ENCODE measurements at regions of chr3 and their contacts with region 1.

Region 1: DNA sequence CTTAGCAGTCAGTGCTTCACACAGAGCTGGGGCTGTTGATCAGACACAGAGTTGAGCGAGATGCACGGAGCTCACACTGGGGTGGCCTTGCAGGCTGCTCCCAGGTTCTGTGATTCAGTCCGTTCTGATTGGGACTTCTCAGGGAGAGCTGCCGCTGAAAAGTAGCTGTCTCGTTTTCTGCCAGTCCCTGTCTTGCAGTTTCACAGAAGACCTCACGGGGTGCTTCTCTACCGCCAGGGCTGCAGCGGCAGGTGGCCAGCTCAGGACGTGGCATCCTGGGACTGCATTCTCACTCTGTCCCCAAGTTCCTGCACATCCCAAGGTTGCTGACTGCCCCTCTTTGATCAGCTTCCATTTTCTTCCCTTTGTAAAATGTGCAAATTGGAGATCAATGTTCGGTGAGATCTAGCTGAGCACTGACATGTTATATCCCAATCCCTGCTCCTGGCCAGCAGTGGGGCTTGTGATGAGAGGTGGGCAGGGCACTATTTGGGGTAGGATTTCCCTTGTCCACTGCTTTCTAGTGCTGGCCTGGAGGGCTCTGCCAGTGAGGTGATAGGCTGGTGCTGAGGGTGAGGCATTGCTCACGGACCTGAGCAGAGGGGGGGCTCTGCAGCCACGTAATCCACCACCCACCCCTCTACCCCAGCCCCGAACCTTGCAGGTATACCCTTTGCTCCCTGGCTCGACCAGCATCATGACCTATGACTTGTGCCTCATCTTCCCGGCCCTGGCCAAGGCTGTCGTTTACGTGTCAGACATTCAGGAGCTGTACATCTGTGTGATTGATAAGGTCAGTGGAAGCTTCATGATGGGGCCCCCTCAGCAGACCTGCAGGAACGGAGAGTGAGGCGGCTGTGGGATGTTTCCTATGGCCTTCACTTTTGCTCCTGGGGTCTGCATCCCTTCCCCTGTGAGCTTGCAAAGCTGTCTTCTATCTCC is 5.3 kb upstream of the TXNRD3 start:
- DNase-seq: no peak
- H3K4me3 ChIP-seq: no peak overlapping the region
- H3K27ac ChIP-seq: no peak overlapping the region
- H3K4me1 ChIP-seq: peaks cover 0 to 4% (median 0%) of the 10 kb centered on the region in 3 donors
- H3K27me3 ChIP-seq: peaks cover 0 to 73% (median 0%) of the 10 kb centered on the region in 4 donors
- CTCF ChIP-seq: peak in 3 of 6 experiments; percentile 11 to 32 (median 14)
- POLR2A ChIP-seq: no peak

Region 2: DNA sequence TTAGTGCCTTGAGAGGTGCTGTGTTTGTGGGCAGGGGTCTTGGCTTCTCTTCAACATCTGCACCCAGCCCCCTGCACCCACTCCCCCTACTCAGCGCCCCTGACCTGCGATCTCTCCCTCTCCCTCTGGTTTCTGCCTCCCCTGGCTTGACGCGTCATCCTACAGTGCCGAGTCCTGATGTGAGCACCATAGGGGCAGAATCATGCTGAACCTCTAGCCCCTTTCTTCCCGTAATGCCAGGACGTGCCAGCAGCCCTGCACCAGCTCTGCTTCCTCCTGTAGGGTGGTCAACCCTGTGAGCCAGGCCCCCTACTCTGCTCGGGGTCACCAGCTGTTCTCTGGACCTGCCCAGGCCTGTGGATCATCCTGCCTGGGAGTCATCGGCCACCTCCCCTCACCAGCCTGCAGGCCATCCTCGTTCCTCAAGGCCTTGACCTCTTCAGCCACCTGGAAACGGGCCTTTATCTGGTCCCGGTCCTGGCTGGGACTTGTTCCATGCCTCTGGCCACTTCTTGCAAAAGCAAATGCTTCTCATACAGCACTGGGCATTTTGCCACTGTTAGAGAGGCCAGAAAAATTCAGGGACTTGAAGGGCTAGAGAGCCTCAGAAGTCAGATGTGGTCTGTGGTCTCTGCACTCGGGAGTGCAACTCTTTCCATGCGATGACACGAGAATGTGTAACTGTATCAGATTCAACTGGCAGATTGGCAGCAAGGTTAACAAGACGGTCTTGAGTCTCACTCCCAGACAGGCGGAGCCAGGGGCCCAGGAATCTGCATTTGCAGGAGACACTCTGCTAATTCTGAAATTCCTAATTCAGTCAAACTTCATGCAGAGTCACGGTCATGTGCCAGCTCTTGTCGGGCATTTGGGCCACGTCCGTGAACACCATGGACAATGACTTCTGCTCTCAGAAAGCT is 286.3 kb before region 1 on chr3:
- intact Hi-C with region 1: no loop called
- DNase-seq: no peak
- H3K4me3 ChIP-seq: no peak overlapping the region
- H3K27ac ChIP-seq: peak overlapping the region in 2 of 4 donors; percentile 17 to 50
- H3K4me1 ChIP-seq: peaks cover 0 to 11% (median 0%) of the 10 kb centered on the region in 3 donors
- H3K27me3 ChIP-seq: peaks cover 0 to under 1% (median 0%) of the 10 kb centered on the region in 4 donors
- CTCF ChIP-seq: no peak
- POLR2A ChIP-seq: no peak

Region 3: GRCh38 chr3:127089486-127090145 is 429.4 kb after region 1 on chr3:
- intact Hi-C with region 1: no loop called
- DNase-seq: no peak
- H3K4me3 ChIP-seq: no peak overlapping the region
- H3K27ac ChIP-seq: no peak overlapping the region
- H3K4me1 ChIP-seq: no peaks in the 10 kb centered on the region
- H3K27me3 ChIP-seq: peaks cover 0 to 6% (median 0%) of the 10 kb centered on the region in 4 donors
- CTCF ChIP-seq: no peak
- POLR2A ChIP-seq: no peak

Region 4: DNA sequence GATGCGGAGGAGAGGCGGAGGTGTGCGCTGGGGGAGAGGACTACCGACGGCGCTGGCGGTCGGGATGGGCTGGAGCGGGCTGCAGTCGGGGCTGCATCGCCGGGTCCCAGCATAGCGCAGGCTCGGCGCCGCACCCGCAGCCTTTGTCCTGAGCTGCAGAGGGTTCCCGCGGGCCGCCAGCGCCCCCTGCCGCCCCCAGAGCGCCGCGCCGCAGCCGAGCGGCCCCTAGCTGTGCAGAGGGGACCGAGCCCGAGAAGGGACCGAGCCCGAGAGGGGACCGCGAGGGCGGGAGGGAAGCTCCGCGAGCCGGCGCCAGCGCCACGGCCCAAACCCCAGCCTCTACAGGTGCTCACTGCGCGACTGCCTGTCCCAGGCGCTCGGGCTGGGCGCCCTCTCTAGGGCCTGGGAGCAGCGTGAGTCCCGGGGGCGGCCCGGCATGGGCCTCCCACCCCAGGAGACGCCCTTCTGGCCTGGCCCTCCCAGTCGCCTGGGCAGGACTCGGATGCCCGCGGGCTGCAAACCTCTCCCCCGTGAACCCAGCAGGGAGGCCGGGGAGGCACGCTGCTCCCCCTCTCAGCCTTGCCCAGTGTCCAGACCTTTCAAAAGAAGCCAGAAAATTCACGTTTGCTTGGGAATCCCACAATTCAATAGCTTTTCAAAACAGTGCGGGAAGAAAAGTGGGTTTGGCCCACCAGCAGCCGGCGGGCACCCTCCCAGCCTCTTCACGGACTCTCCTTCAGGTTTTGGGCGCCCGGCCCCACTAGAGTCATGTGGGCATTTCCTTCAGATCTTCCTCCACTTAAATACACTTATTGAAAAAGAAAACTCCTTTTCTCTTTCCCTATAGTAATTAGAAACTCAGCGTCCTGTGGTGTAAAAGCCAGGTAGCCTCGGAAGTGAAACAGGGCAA is 795.6 kb after region 1 on chr3:
- intact Hi-C with region 1: loop called (anchors 10 kb)
- DNase-seq: no peak
- H3K4me3 ChIP-seq: peak overlapping the region in 3 of 4 donors; percentile 16 to 56 (median 30)
- H3K27ac ChIP-seq: no peak overlapping the region
- H3K4me1 ChIP-seq: peaks cover 19 to 36% (median 20%) of the 10 kb centered on the region in 3 donors
- H3K27me3 ChIP-seq: peaks cover 0 to 85% (median 7%) of the 10 kb centered on the region in 4 donors
- CTCF ChIP-seq: peak; percentile 77 to 93 (median 88)
- POLR2A ChIP-seq: no peak